ENCODE measurements at regions of chr1 and their contacts with region 1.

Region 1: GRCh38 chr1:18597160-18598042 is 33.2 kb upstream of the PAX7 start:
- DNase-seq: no peak
- H3K4me3 ChIP-seq: no peak overlapping the region
- CTCF ChIP-seq: peak; percentile 92

Region 2: DNA sequence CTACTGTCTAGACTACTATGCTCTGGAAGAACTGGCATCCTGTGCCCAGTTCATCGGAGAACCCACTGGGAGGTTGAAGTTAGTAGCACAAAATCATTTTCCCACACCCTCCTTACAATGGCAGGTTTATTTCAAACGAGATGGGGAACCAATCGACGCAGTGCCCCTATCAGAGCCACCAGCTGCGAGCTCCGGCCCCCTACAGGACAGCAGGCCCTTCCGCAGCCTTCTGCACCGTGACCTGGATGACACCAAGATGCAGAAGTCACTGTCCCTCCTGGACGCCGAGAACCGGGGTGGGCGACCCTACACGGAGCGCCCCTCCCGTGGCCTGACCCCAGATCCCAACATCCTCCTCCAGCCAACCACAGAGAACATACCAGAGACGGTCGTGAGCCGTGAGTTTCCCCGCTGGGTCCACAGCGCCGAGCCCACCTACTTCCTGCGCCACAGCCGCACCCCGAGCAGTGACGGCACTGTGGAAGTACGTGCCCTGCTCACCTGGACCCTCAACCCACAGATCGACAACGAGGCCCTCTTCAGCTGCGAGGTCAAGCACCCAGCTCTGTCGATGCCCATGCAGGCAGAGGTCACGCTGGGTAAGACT is 232.2 kb before region 1 on chr1:
- CTCF ChIA-PET with region 1: no interaction called
- POLR2A ChIA-PET with region 1: no interaction called
- DNase-seq: no peak
- H3K4me3 ChIP-seq: no peak overlapping the region
- CTCF ChIP-seq: no peak

Region 3: GRCh38 chr1:18581420-18581880 is 16.0 kb before region 1 on chr1:
- CTCF ChIA-PET with region 1: interaction called, 44 read pairs
- POLR2A ChIA-PET with region 1: no interaction called
- DNase-seq: no peak
- H3K4me3 ChIP-seq: no peak overlapping the region
- CTCF ChIP-seq: peak; percentile 79

Region 4: GRCh38 chr1:18814425-18814824 is 217.0 kb after region 1 on chr1:
- CTCF ChIA-PET with region 1: interaction called, 108 read pairs
- POLR2A ChIA-PET with region 1: no interaction called
- DNase-seq: no peak
- H3K4me3 ChIP-seq: no peak overlapping the region
- CTCF ChIP-seq: no peak

Region 5: DNA sequence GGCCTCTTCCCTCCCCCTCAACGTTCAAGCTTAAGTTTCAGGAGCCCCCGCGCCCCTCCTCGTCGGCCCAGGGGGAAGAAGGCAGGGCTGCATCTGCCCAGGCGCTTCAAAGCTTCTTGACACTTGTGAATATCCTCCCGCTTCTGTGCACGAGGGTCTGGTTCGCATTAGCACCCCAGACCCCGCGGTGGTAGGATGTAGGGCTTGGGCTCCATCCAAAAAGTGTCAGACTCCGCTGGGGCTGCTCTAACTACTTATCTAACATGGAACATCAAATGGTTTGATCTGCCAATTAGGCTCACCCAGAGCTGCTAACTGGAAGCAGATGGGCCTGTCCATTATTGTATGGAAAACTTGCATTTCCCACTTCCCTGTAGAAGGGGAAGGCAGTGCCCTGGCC is 233.2 kb after region 1 on chr1:
- CTCF ChIA-PET with region 1: interaction called, 17 read pairs
- POLR2A ChIA-PET with region 1: no interaction called
- DNase-seq: no peak
- H3K4me3 ChIP-seq: no peak overlapping the region
- CTCF ChIP-seq: no peak

Region 6: DNA sequence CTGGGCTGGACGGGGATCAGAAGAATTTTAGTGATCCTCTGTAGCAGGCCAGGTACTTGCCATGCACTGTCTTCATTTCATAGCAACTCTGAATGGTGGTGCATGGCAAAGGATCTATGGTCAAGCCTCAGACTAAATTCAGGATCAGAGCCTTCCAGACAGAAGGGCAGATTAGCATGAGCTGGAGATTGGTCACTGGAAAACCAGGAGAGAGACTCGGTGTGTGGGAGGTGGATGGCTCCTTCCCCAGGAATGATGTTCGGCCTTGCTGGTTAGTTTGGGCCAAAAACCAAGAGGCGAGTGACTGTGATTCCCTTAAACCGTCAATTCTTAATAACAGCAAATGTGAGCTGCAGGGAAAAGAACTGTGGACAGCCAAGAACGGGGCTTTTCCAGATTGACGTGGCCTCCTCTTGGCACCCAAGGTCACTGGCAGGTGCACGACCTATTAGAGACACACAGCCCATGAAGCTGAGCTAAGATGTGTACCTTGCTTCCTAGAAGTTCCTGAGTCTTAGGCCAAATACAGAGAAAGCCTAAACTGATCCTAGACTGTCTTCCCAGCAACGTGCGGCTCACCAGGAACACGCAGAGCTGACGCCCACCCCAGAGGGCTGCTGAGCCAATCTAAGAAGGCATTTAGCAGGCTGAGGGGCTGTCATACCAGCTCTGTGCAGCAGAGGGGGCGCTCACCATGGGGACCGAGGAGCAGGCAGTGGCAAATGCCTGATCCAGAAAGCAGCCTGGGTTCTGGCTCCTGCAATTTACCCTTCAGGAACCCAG is 286.4 kb after region 1 on chr1:
- CTCF ChIA-PET with region 1: interaction called, 18 read pairs
- POLR2A ChIA-PET with region 1: no interaction called
- DNase-seq: no peak
- H3K4me3 ChIP-seq: no peak overlapping the region
- CTCF ChIP-seq: peak; percentile 97